Activated CD4-positive, alpha-beta T cell treated with anti-CD3 and anti-CD28 coated beads, Interleukin-2, amount 10 ng/mL, durations not matched to agents 24 days and 14 days (primary cell): ENCODE measurements at regions of chr9 and their contacts with region 1.

Region 1: GRCh38 chr9:4970970-4971641 is 14.0 kb upstream of the JAK2 start:
- DNase-seq: peak; percentile 88
- H3K4me3 Mint-ChIP-seq: no peak overlapping the region
- H3K27ac Mint-ChIP-seq: no peak overlapping the region
- H3K4me1 Mint-ChIP-seq: peaks cover 20% of the 10 kb centered on the region
- H3K27me3 Mint-ChIP-seq: no peaks in the 10 kb centered on the region

Region 2: GRCh38 chr9:4939118-4939561 is 32.0 kb before region 1 on chr9:
- intact Hi-C with region 1: loop called (anchors 1 kb)
- DNase-seq: peak; percentile 83
- H3K4me3 Mint-ChIP-seq: peak overlapping the region; percentile 40
- H3K27ac Mint-ChIP-seq: peak overlapping the region; percentile 92
- H3K4me1 Mint-ChIP-seq: peaks cover 67% of the 10 kb centered on the region
- H3K27me3 Mint-ChIP-seq: no peaks in the 10 kb centered on the region